ENCODE measurements at regions of chr5 and their contacts with region 1.

Region 1: DNA sequence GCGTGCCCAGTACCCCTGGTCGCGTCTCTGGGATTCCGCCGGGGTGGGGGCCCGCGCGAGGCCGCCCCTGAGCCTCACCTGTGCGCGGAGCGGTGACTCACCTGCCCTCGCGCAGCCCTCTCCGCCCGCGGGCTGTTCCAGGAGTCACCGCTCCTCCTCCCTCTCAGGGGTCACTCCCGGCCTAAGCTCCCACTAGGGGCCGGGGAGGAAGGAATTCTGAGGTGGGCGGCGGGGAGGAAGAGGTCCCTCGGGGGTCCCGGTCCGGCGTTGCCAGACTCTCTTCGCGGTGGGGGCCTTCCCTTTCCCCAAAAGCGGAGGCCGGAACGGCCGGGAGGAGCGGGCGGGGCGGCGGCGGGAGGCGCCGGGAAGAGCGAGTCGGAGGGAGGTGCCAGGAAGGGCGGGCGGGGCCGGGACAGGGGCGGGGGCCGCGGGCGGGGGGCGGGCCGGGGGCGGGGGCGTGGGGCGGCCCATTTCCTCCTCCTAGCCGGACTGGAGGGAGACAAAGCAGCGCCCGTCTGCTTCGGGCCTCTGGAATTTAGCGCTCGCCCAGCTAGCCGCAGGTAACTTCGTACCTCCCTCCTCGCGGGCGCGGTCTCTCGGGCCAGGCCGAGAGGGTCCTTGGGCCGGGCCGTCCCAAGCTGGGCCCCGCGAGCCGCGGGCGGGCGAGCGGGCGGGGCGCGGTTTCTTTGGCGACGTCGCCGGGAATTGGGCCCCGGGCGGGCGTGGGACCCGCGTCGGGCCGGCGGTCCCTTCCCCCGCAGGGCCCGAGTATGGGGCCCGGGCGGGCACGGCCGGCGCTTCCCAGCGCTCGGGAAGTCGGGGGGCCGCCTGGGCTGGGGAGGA is at the start of gene CTNNA1:
- DNase-seq: peak; percentile 89
- H3K4me3 Mint-ChIP-seq: peak within 1 kb of the TSS; percentile 87
- H3K27ac Mint-ChIP-seq: peak within 1 kb of the TSS; percentile 94
- H3K4me1 Mint-ChIP-seq: peaks cover 49% of the 10 kb centered on the region
- H3K27me3 Mint-ChIP-seq: no peaks in the 10 kb centered on the region
- CTCF ChIP-seq: no peak
- total RNA-seq, gene CTNNA1: 519 and 638 TPM in 2 replicates

Region 2: GRCh38 chr5:138663009-138663408 is 90.2 kb before region 1 on chr5:
- CTCF ChIA-PET with region 1: interaction called, 4 read pairs
- POLR2A ChIA-PET with region 1: interaction called, 23 read pairs
- intact Hi-C with region 1: no loop called
- DNase-seq: peak; percentile 27
- H3K4me3 Mint-ChIP-seq: no peak overlapping the region
- H3K27ac Mint-ChIP-seq: no peak overlapping the region
- H3K4me1 Mint-ChIP-seq: peaks cover 29% of the 10 kb centered on the region
- H3K27me3 Mint-ChIP-seq: no peaks in the 10 kb centered on the region
- CTCF ChIP-seq: no peak

Region 3: DNA sequence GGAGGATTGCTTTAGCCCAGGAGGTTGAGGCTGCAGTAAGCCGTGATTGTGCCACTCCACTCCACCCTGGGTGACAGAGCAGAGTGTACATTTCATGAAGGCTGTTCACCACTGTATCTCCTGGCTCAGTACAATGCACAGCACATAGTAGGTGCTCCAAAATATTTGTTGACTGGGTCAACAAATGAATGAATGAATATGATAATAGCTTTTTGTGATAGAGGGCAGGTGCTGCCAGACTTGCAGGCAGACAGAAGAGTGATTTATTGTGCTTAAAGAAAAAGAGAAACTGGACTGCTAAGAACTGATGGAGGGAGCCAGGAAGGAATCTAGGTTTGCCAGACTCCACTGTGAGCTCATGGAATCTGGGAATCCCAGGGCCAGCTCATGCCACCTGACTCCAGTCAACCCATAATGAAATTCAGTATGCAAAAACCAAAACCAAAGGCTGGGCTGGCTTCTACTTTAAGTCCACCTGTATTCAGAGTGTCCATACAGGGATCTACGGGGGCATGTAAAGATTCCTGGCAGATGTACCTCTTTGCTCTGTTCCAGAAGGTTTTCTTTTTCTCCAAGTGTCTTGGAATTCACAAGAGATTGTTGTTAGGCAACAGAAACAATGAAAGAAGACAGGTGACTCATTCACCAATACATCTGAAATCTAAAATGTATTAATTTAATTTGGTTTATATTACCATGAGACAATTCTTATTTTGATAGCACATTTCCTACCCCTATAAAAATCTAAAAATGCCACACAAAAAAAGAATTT is 15.5 kb before region 1 on chr5:
- CTCF ChIA-PET with region 1: interaction called, 6 read pairs
- POLR2A ChIA-PET with region 1: interaction called, 14 read pairs
- intact Hi-C with region 1: no loop called
- DNase-seq: peak; percentile 32
- H3K4me3 Mint-ChIP-seq: no peak overlapping the region
- H3K27ac Mint-ChIP-seq: no peak overlapping the region
- H3K4me1 Mint-ChIP-seq: peaks cover 24% of the 10 kb centered on the region
- H3K27me3 Mint-ChIP-seq: no peaks in the 10 kb centered on the region
- CTCF ChIP-seq: no peak

Region 4: GRCh38 chr5:138824924-138825863 is 72.0 kb after region 1 on chr5:
- CTCF ChIA-PET with region 1: interaction called, 10 read pairs
- POLR2A ChIA-PET with region 1: no interaction called
- intact Hi-C with region 1: no loop called
- DNase-seq: peak; percentile 24
- H3K4me3 Mint-ChIP-seq: no peak overlapping the region
- H3K27ac Mint-ChIP-seq: no peak overlapping the region
- H3K4me1 Mint-ChIP-seq: peaks cover 7% of the 10 kb centered on the region
- H3K27me3 Mint-ChIP-seq: no peaks in the 10 kb centered on the region
- CTCF ChIP-seq: peak; percentile 40

Region 5: DNA sequence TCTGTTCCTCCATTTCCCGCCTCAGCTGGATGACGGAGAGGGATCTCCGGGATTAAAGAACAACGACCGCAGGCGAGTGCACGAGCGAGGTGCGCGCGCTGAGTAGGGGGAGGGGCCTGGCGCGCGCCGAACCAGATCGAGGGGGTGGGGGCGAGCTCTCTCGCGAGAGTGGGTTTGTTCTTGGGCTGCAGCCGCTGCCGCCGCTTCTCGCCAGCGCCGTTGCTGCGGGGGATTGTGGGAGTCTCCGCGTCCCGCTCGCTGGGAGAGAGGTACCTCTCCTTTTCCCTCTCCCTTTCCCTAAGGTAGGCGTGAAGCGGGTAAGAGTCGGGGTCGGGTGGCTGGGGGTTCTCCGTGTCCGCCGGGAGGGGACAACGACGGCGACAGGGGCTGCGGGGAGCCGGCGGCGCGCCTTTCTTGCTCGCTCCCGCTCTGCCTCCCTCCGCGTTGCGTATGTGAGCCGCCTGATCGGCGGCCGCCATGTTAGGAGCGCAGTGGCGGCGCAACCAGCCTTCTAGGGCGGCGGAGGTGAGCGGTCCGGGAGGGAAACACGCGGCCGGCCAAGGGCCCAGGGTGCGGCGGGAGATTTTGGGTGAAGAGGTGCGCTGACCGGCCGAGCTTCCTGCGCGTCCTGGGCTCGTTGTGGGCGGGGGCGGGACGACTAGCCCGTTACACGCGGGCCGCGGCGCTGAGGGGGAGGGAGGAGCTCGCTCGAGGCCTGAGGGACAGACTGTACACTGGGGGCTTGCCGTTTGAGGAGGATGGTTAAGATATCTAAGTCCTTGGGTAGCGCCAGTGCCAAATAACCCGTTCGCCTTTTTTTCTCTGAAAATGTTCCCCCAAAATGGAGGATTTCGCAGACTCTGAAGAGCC is 540.6 kb after region 1 on chr5 and contains the start of gene MATR3:
- CTCF ChIA-PET with region 1: no interaction called
- POLR2A ChIA-PET with region 1: interaction called, 14 read pairs
- intact Hi-C with region 1: no loop called
- DNase-seq: peak; percentile 98
- H3K4me3 Mint-ChIP-seq: peak within 1 kb of the TSS; percentile 94
- H3K27ac Mint-ChIP-seq: peak within 1 kb of the TSS; percentile 99
- H3K4me1 Mint-ChIP-seq: peaks cover 37% of the 10 kb centered on the region
- H3K27me3 Mint-ChIP-seq: no peaks in the 10 kb centered on the region
- CTCF ChIP-seq: no peak
- total RNA-seq, gene MATR3: 152 and 159 TPM in 2 replicates

Region 6: DNA sequence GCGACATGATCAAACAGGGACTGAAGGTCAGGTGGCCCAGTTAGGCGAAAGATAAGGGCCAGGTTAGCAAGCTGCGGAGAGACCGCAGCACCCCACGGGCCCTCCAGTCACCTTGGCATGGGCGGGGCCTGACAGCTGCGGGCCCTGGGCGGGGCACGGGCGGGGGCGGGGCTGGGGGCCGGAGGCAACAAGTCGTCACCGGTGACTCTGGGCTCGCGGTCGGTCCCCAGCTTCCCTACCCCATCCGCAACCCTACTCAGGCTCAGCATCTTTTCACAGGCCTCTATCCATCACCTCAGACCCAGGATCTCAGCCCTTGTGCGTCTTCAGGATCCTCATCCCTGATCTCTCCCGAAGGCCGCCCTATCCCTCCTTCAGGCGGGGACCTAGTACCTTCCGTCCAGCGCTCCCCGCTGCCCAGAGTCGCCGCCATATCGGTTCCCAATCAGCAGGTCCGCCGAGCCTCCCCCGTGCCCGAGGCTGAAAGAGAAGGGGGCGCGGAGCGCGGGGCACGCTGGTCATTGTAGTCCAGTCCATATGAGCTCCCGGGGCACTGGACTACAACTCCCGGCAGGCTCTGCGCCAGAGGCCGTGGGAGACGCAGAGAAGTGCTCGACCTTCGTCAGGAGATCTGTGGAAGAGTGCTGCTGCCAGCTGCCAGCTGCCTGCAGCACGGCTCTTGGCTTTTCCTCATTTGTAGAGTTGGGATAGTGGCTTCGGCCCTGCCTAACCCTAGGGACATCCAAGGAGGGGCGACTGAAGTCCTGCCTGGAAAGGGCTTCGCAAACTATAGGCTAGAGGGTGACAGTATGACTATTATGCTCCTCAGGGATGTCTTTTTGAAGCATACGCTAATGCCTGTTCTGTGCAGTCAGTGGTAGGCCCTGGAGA is 686.1 kb after region 1 on chr5 and contains the start of gene DNAJC18:
- CTCF ChIA-PET with region 1: no interaction called
- POLR2A ChIA-PET with region 1: no interaction called
- intact Hi-C with region 1: no loop called
- DNase-seq: peak; percentile 92
- H3K4me3 Mint-ChIP-seq: peak within 1 kb of the TSS; percentile 89
- H3K27ac Mint-ChIP-seq: peak within 1 kb of the TSS; percentile 96
- H3K4me1 Mint-ChIP-seq: peaks cover 11% of the 10 kb centered on the region
- H3K27me3 Mint-ChIP-seq: no peaks in the 10 kb centered on the region
- CTCF ChIP-seq: no peak
- total RNA-seq, gene DNAJC18: 14.1 and 15.1 TPM in 2 replicates